Endothelial cell of umbilical vein (primary cell): ENCODE measurements at regions of chr21 and their contacts with region 1.

Region 1: GRCh38 chr21:38126669-38127303 is 130.0 kb upstream of the KCNJ15 start:
- DNase-seq: peak; percentile 51
- H3K4me3 ChIP-seq: no peak overlapping the region
- H3K27ac ChIP-seq: no peak overlapping the region
- H3K4me1 ChIP-seq: no peaks in the 10 kb centered on the region
- H3K27me3 ChIP-seq: peaks cover 0 to 7% of the 10 kb centered on the region in 2 experiments
- CTCF ChIP-seq: peak; percentile 74 to 91
- POLR2A ChIP-seq: no peak

Region 2: DNA sequence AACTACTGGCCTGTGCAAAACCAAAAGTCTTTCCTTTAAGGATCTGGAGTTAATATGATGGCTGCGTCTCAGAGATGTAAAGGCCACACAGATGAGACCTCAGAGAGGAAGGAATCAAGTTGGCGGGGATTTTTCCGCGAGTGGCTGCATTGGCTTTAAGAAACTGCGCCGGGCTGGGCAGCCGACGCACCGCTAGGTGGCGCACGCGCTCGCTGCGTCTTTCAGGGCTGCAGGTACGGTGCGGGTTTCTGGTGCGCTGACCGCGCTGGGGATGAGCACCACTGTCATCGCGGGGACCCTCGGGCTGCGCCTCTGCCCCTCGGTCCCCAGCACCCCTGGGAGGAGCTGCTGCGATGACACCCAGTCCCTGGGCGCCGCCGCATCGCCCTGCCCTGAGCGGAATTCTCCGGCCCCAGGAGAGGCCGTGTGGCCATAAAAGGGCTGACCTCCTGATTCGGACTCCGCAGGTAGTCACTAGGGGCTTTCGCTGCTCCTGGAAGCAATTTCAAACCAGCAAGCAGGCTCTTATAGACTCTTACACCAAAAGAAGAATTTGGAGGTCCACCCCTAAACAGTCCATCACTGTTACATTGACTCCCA is 451.5 kb before region 1 on chr21:
- CTCF ChIA-PET with region 1: interaction called, 20 read pairs
- POLR2A ChIA-PET with region 1: no interaction called
- dilution Hi-C with region 1: no loop called
- intact Hi-C with region 1: no loop called
- DNase-seq: peak; percentile 48
- H3K4me3 ChIP-seq: no peak overlapping the region
- H3K27ac ChIP-seq: no peak overlapping the region
- H3K4me1 ChIP-seq: peaks cover 3% of the 10 kb centered on the region
- H3K27me3 ChIP-seq: peaks cover 4 to 13% of the 10 kb centered on the region in 2 experiments
- CTCF ChIP-seq: peak; percentile 95 to 96
- POLR2A ChIP-seq: no peak

Region 3: DNA sequence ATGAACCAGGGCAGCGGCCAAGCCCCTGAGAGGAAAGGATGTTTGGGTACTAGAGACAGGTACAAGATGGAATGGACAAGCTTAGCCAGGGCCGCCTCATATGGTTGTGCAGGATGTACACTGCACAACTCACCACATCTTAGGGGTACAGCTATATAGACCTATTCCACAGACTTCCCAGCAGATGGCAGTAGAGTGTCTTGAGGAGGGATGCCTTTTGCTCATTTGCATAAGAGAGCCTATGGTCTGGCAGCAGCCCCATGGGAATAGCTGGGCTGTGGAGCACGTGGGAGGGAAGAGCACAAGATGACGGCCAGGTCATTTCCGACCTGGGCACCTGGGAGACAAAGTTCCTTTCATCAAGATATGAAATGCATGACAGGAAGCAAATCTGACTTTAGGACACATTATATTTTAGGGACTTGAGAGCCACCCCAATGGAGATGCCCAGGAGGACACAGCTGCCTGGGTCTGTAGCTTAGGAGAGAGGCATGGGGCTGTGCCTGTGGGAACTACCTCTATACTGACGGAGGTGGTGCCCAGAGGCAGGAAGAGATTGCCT is 426.1 kb before region 1 on chr21:
- CTCF ChIA-PET with region 1: interaction called, 46 read pairs
- POLR2A ChIA-PET with region 1: no interaction called
- dilution Hi-C with region 1: no loop called
- intact Hi-C with region 1: loop called (anchors 1 kb)
- DNase-seq: peak; percentile 56
- H3K4me3 ChIP-seq: no peak overlapping the region
- H3K27ac ChIP-seq: no peak overlapping the region
- H3K4me1 ChIP-seq: no peaks in the 10 kb centered on the region
- H3K27me3 ChIP-seq: peaks cover 10 to 12% of the 10 kb centered on the region in 2 experiments
- CTCF ChIP-seq: peak; percentile 58 to 74
- POLR2A ChIP-seq: no peak

Region 4: GRCh38 chr21:37758982-37759381 is 367.8 kb before region 1 on chr21:
- CTCF ChIA-PET with region 1: interaction called, 23 read pairs
- POLR2A ChIA-PET with region 1: no interaction called
- dilution Hi-C with region 1: no loop called
- intact Hi-C with region 1: loop called (anchors 1 kb)
- DNase-seq: peak; percentile 6
- H3K4me3 ChIP-seq: no peak overlapping the region
- H3K27ac ChIP-seq: no peak overlapping the region
- H3K4me1 ChIP-seq: no peaks in the 10 kb centered on the region
- H3K27me3 ChIP-seq: peaks cover 0 to 6% of the 10 kb centered on the region in 2 experiments
- CTCF ChIP-seq: peak; percentile 23 to 44
- POLR2A ChIP-seq: no peak

Region 5: GRCh38 chr21:37873655-37874054 is 253.1 kb before region 1 on chr21:
- CTCF ChIA-PET with region 1: no interaction called
- POLR2A ChIA-PET with region 1: no interaction called
- dilution Hi-C with region 1: no loop called
- intact Hi-C with region 1: no loop called
- DNase-seq: peak; percentile 5
- H3K4me3 ChIP-seq: no peak overlapping the region
- H3K27ac ChIP-seq: no peak overlapping the region
- H3K4me1 ChIP-seq: no peaks in the 10 kb centered on the region
- H3K27me3 ChIP-seq: peaks cover 0 to 2% of the 10 kb centered on the region in 2 experiments
- CTCF ChIP-seq: no peak
- POLR2A ChIP-seq: no peak

Region 6: DNA sequence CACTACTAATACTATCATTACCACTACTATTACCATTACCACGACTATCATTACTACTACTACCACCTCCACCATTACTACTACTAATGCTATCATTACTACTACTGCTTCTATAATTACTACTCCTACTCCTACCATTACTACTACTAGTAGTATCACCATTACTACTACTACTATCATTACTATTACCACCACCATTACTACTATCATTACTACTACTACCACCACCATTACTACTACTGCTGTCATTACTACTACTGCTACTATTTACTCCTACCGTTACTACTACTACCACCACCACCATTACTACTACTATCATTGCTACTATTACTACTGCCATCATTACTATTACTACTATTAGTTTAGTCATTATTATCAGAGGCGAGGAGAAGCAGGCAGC is 10.9 kb before region 1 on chr21:
- CTCF ChIA-PET with region 1: interaction called, 10 read pairs
- POLR2A ChIA-PET with region 1: no interaction called
- dilution Hi-C with region 1: no loop called
- intact Hi-C with region 1: no loop called
- DNase-seq: no peak
- H3K4me3 ChIP-seq: no peak overlapping the region
- H3K27ac ChIP-seq: no peak overlapping the region
- H3K4me1 ChIP-seq: no peaks in the 10 kb centered on the region
- H3K27me3 ChIP-seq: peaks cover 0 to 3% of the 10 kb centered on the region in 2 experiments
- CTCF ChIP-seq: no peak
- POLR2A ChIP-seq: no peak